ENCODE measurements at regions of chr15 and their contacts with region 1.

Region 1: DNA sequence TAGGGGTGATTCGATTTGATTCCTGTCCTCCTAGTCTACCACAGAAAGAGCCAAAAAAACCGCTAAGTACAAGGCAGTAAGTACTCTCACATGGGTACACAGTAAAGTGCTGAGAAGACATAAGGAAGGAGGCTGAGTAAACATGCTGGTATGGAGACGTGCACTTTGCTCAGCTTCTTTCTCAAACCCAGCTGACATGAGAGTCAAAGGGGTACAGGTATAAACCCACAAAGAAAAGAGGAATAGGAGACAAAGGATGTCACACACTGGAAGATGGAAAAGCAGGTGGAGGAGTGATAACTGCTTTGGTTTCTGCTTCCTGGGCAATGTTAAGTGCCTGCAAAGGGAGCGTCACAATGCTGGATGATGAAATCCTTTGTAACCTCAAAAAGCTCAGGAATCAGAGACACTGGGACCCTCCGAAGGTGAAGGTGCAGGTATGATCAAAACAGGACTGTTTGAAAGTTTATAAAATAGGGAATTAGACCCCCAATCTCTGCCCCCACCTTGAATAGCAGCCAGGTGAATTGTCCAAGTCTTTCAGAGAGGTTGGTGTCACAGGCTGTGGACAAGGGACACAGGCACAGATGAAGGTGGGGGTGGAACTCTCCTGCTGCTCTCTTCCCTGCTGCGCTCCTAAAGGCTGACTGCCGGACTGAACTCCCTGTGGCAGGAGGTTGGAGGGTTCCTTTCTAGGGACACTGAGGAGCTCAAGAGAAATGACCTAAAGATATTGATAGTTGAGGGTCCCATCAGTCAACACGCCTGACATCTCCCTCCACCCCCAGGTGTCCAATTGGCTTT is 101.8 kb downstream of the RAB11A start:
- DNase-seq: no peak
- ATAC-seq: no peak
- H3K4me3 ChIP-seq: peak overlapping the region in 1 of 2 experiments; percentile 9; a peak in 2 of 4 replicates
- H3K27ac ChIP-seq: peak overlapping the region; percentile 52; the same call in 1 of the 2 replicates
- H3K4me1 ChIP-seq: no peaks in the 10 kb centered on the region
- H3K27me3 ChIP-seq: no peaks in the 10 kb centered on the region; the same call in 1 of the 2 replicates
- CTCF ChIP-seq: no peak

Region 2: GRCh38 chr15:65952425-65953053 is 18.6 kb before region 1 on chr15:
- CTCF ChIA-PET with region 1: no interaction called
- POLR2A ChIA-PET with region 1: no interaction called
- in situ Hi-C with region 1: no loop called
- intact Hi-C with region 1: no loop called
- DNase-seq: no peak
- ATAC-seq: no peak; the same call in 1 of the 2 replicates
- H3K4me3 ChIP-seq: no peak overlapping the region
- H3K27ac ChIP-seq: no peak overlapping the region
- H3K4me1 ChIP-seq: peaks cover 10% of the 10 kb centered on the region
- H3K27me3 ChIP-seq: 0 out of 2 replicates have a peak, but pooled peaks cover 2% of the 10 kb centered on the region
- CTCF ChIP-seq: no peak

Region 3: DNA sequence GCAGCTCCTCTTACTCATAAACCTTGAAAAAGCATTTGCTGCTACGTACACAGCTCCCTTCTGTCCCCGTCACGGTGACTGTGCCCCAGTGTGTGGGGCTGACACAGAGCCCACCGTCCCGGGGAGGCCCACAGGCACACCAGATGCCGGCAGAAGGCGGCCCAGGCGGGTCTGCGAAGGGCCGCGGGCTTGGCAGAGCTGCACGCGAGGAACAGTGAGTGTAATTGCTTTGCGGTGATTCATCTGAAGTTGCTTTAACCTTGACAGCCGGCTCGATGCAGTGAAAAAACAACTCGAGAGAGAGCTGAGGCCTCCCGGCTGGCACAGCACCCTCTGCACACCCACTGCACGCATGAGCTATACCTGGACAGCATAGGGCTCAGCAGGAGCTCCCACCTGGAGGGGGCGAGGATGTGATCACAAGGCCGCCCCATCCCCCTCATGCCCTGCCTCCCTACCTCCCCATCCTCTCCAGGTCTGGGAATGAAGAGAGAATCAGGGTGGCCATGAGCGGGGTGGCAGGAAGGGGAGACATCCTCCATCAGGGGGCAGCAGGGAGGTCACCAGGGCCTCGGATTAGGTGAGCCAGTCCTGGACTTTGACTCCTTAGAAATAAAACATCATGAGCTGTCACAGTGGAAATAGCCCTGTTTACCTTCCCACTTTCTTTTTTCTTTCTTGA is 109.7 kb after region 1 on chr15:
- CTCF ChIA-PET with region 1: interaction called, 15 read pairs
- POLR2A ChIA-PET with region 1: no interaction called
- in situ Hi-C with region 1: no loop called
- intact Hi-C with region 1: no loop called
- DNase-seq: no peak
- ATAC-seq: peak; percentile 86
- H3K4me3 ChIP-seq: no peak overlapping the region
- H3K27ac ChIP-seq: no peak overlapping the region
- H3K4me1 ChIP-seq: peaks cover 9% of the 10 kb centered on the region; the same call in 1 of the 2 replicates
- H3K27me3 ChIP-seq: no peaks in the 10 kb centered on the region; the same call in 1 of the 2 replicates
- CTCF ChIP-seq: no peak; the same call in 1 of the 2 replicates